Activated CD8-positive, alpha-beta T cell treated with anti-CD3 and anti-CD28 coated beads, Interleukin-2, amount 10 ng/mL, durations not matched to agents 7 days and 5 days (primary cell): ENCODE measurements at regions of chr1 and their contacts with region 1.

Region 1: DNA sequence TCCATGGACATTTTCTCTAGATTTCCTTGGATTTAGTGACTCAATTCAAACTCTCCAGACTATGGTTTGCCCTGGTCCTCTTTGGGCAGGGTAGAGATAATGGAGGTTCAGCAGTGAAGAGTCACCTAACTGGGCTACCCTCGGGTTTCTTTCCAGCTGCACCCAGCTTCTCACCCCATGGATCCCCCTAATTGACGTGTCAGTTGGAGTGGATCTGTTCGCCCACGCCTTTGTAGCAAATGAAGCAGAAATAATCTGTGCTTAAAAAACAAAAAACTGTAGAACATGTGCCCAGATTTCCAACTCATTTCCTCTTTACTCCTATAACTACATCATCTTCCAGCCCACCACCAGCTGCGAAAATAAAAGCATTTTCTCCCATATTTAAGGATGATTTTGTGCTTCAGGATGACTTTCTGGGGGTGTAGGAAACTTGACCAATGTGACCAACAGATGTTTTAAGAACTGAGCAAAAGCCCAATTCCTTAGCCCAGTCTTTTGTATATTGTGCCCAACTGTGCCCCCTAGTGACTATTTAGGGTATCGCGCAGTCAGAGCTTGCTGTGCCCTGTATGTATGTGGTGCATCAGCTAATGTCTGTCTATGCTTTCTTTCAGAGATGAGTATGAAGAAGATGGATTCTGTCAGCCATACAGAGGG is 66.5 kb upstream of the UBE2U start:
- DNase-seq: peak; percentile 77
- ATAC-seq: peak; percentile 64
- H3K4me3 Mint-ChIP-seq: no peak overlapping the region
- H3K27ac Mint-ChIP-seq: no peak overlapping the region
- H3K4me1 Mint-ChIP-seq: no peaks in the 10 kb centered on the region
- H3K27me3 Mint-ChIP-seq: peaks cover 10% of the 10 kb centered on the region

Region 2: GRCh38 chr1:63615768-63616420 is 521.0 kb before region 1 on chr1:
- CTCF ChIA-PET with region 1: interaction called, 19 read pairs
- POLR2A ChIA-PET with region 1: no interaction called
- DNase-seq: peak; percentile 75
- ATAC-seq: peak; percentile 61
- H3K4me3 Mint-ChIP-seq: no peak overlapping the region
- H3K27ac Mint-ChIP-seq: no peak overlapping the region
- H3K4me1 Mint-ChIP-seq: peaks cover 3% of the 10 kb centered on the region
- H3K27me3 Mint-ChIP-seq: no peaks in the 10 kb centered on the region

Region 3: DNA sequence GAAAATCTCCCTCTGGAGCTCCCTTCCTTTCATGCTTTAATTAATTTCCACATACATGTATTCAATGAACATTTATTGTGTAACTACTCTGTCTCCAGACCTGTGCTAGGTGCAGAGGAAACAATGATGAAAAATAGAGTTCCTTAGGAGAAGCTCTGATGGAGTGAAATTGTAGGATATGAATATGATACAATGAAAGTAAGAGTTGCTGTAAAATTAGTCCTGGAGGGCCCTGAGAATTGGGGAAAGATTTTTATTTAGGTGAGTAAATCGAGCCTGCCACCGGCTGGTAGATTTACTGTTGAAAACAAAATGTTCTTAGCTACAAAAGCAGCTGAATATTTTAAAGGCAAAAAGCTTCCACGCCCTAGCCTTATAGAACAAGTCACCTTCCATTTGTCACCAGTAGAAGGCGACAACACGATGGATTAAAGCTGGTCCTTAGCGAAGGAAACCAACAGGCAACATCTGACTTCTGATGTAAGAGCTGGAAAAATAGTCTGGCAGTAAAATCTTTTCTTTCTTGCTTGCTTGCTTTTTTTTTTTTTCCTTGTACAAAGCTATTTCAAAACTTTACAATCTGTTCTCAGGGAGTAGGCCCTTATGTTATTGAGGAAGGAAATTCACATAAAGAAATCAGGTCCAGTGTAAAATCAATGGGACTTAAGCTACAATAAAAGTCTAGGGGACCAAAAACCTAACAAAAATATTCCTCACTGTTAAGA is 445.0 kb before region 1 on chr1:
- CTCF ChIA-PET with region 1: interaction called, 26 read pairs
- POLR2A ChIA-PET with region 1: no interaction called
- DNase-seq: peak; percentile 51
- ATAC-seq: peak; percentile 73
- H3K4me3 Mint-ChIP-seq: no peak overlapping the region
- H3K27ac Mint-ChIP-seq: no peak overlapping the region
- H3K4me1 Mint-ChIP-seq: peaks cover 3% of the 10 kb centered on the region
- H3K27me3 Mint-ChIP-seq: peaks cover 2% of the 10 kb centered on the region

Region 4: DNA sequence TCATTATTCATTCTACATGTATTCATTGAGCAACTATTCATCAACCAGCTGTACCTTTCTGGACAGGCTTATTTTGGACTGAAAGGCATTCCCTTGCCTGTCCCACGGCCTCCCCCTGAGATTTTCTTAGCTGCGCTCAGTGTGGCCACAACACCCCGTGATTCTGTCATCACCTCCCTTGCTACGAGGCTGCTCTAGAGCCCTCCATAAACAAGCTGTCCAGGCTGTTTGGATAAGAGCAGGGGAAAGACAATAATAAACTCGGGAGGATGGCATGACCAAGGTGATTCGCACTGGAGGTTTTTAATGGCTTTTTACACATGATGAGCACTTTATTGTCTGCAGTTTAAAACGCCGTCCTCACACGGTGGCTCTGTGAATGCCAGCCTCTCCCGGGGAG is 223.3 kb before region 1 on chr1:
- CTCF ChIA-PET with region 1: no interaction called
- POLR2A ChIA-PET with region 1: no interaction called
- DNase-seq: no peak
- ATAC-seq: no peak
- H3K4me3 Mint-ChIP-seq: no peak overlapping the region
- H3K27ac Mint-ChIP-seq: no peak overlapping the region
- H3K4me1 Mint-ChIP-seq: no peaks in the 10 kb centered on the region
- H3K27me3 Mint-ChIP-seq: peaks cover 7% of the 10 kb centered on the region

Region 5: DNA sequence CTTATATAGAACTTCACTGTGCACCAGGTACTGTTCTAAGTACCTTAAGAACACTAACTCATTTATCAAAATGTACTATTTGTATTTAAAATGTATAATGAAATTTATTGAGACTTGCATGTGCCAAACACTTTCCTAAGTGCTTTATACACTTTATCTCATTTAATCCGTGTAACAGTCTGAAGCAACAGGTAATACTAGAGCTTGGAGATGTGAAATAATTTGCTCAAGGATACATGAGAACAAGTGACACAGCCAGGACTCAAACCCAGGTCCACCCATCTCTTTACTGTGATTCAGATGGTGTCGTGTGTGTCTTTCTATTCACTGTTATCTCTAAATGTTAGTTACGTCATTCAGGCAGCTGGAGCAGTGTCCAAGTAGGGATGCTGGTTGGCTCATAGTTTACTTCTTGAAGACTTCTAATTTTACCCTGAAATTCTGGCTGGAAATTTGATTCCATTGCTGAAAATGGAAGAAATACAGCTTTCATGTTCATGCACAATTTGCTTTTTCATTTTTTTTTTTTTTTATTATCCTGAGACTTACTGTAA is 103.1 kb before region 1 on chr1:
- CTCF ChIA-PET with region 1: no interaction called
- POLR2A ChIA-PET with region 1: no interaction called
- DNase-seq: no peak
- ATAC-seq: no peak
- H3K4me3 Mint-ChIP-seq: no peak overlapping the region
- H3K27ac Mint-ChIP-seq: no peak overlapping the region
- H3K4me1 Mint-ChIP-seq: no peaks in the 10 kb centered on the region
- H3K27me3 Mint-ChIP-seq: no peaks in the 10 kb centered on the region

Region 6: GRCh38 chr1:64242895-64243756 is 106.2 kb after region 1 on chr1:
- CTCF ChIA-PET with region 1: interaction called, 15 read pairs
- POLR2A ChIA-PET with region 1: no interaction called
- DNase-seq: no peak
- ATAC-seq: peak; percentile 15
- H3K4me3 Mint-ChIP-seq: peak overlapping the region; percentile 35
- H3K27ac Mint-ChIP-seq: peak overlapping the region; percentile 62
- H3K4me1 Mint-ChIP-seq: peaks cover 21% of the 10 kb centered on the region
- H3K27me3 Mint-ChIP-seq: peaks cover 14% of the 10 kb centered on the region